ENCODE measurements at regions of chr1 and their contacts with region 1.

Region 1: GRCh38 chr1:19918057-19918456 is 5.4 kb downstream of the PLA2G2E start:
- DNase-seq: peak; percentile 68 to 88 (median 80)
- ATAC-seq: peak; percentile 69
- H3K4me3 ChIP-seq: no peak overlapping the region
- H3K4me3 Mint-ChIP-seq: no peak overlapping the region
- H3K27ac ChIP-seq: no peak overlapping the region
- H3K27ac Mint-ChIP-seq: no peak overlapping the region
- H3K4me1 ChIP-seq: no peaks in the 10 kb centered on the region
- H3K4me1 Mint-ChIP-seq: peaks cover 6% of the 10 kb centered on the region
- H3K27me3 ChIP-seq: no peaks in the 10 kb centered on the region
- H3K27me3 Mint-ChIP-seq: no peaks in the 10 kb centered on the region
- CTCF ChIP-seq: peak; percentile 86

Region 2: GRCh38 chr1:19547814-19548213 is 370.2 kb before region 1 on chr1:
- CTCF ChIA-PET with region 1: no interaction called
- POLR2A ChIA-PET with region 1: no interaction called
- intact Hi-C with region 1: no loop called
- DNase-seq: no peak
- ATAC-seq: no peak
- H3K4me3 ChIP-seq: no peak overlapping the region
- H3K4me3 Mint-ChIP-seq: no peak overlapping the region
- H3K27ac ChIP-seq: no peak overlapping the region
- H3K27ac Mint-ChIP-seq: no peak overlapping the region
- H3K4me1 ChIP-seq: no peaks in the 10 kb centered on the region
- H3K4me1 Mint-ChIP-seq: no peaks in the 10 kb centered on the region
- H3K27me3 ChIP-seq: no peaks in the 10 kb centered on the region
- H3K27me3 Mint-ChIP-seq: peaks cover 8% of the 10 kb centered on the region
- CTCF ChIP-seq: no peak

Region 3: GRCh38 chr1:19840228-19840627 is 77.8 kb before region 1 on chr1:
- CTCF ChIA-PET with region 1: no interaction called
- POLR2A ChIA-PET with region 1: no interaction called
- intact Hi-C with region 1: no loop called
- DNase-seq: no peak
- ATAC-seq: no peak
- H3K4me3 ChIP-seq: no peak overlapping the region
- H3K4me3 Mint-ChIP-seq: no peak overlapping the region
- H3K27ac ChIP-seq: no peak overlapping the region
- H3K27ac Mint-ChIP-seq: no peak overlapping the region
- H3K4me1 ChIP-seq: no peaks in the 10 kb centered on the region
- H3K4me1 Mint-ChIP-seq: no peaks in the 10 kb centered on the region
- H3K27me3 ChIP-seq: peaks cover 0 to 7% of the 10 kb centered on the region in 2 experiments
- H3K27me3 Mint-ChIP-seq: peaks cover 22% of the 10 kb centered on the region
- CTCF ChIP-seq: no peak

Region 4: GRCh38 chr1:19960618-19961017 is 42.6 kb after region 1 on chr1:
- CTCF ChIA-PET with region 1: no interaction called
- POLR2A ChIA-PET with region 1: no interaction called
- intact Hi-C with region 1: loop called in 1 of 2 experiments (anchors 5 kb)
- DNase-seq: no peak
- ATAC-seq: no peak
- H3K4me3 ChIP-seq: no peak overlapping the region
- H3K4me3 Mint-ChIP-seq: no peak overlapping the region
- H3K27ac ChIP-seq: no peak overlapping the region
- H3K27ac Mint-ChIP-seq: no peak overlapping the region
- H3K4me1 ChIP-seq: no peaks in the 10 kb centered on the region
- H3K4me1 Mint-ChIP-seq: no peaks in the 10 kb centered on the region
- H3K27me3 ChIP-seq: peaks cover 3 to 6% of the 10 kb centered on the region in 2 experiments
- H3K27me3 Mint-ChIP-seq: peaks cover 74% of the 10 kb centered on the region
- CTCF ChIP-seq: no peak

Region 5: DNA sequence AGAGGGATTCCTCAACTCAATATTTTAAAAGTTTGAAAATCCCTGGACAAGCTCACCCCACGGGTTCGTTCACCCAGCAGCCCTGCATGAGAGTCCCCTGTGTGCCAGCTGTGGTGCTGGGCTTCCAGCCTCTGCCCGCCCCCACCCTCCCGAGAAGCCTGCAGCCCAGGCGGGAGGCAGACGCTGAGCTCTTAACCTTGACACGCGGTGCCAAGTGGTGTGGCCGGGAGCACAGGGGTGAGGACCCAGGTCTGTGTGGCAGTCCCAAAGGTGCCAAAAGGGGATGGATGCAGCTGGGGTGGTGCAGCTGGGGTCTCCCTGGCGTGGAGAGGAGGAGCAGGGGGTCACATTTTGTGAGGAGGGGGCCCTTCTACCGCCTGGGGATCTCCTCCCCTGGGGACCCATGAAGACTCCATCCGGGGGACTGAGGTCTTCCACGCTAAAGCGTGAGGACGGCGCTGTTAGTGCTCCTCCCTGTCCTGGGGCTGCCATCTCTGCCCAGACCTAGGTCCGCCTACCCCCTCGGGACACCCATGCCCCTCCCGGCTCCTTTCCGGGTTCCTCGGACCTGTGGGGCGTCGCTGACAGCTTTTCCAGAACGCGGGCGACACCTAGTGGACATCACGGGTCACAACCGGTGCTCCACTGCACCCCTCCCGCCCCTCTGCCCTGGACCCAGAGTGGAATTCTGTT is 234.0 kb after region 1 on chr1:
- CTCF ChIA-PET with region 1: interaction called, 18 read pairs
- POLR2A ChIA-PET with region 1: no interaction called
- intact Hi-C with region 1: loop called (anchors 1 kb)
- DNase-seq: peak; percentile 64 to 87 (median 73)
- ATAC-seq: peak; percentile 91
- H3K4me3 ChIP-seq: peak overlapping the region; percentile 62
- H3K4me3 Mint-ChIP-seq: peak overlapping the region; percentile 81
- H3K27ac ChIP-seq: no peak overlapping the region
- H3K27ac Mint-ChIP-seq: no peak overlapping the region
- H3K4me1 ChIP-seq: peaks cover 21% of the 10 kb centered on the region
- H3K4me1 Mint-ChIP-seq: peaks cover 12% of the 10 kb centered on the region
- H3K27me3 ChIP-seq: no peaks in the 10 kb centered on the region
- H3K27me3 Mint-ChIP-seq: no peaks in the 10 kb centered on the region
- CTCF ChIP-seq: peak; percentile 91

Region 6: GRCh38 chr1:20194757-20195461 is 276.9 kb after region 1 on chr1:
- CTCF ChIA-PET with region 1: interaction called, 4 read pairs
- POLR2A ChIA-PET with region 1: no interaction called
- intact Hi-C with region 1: loop called (anchors 1 kb)
- DNase-seq: peak; percentile 59 to 83 (median 70)
- ATAC-seq: peak; percentile 67
- H3K4me3 ChIP-seq: no peak overlapping the region
- H3K4me3 Mint-ChIP-seq: no peak overlapping the region
- H3K27ac ChIP-seq: no peak overlapping the region
- H3K27ac Mint-ChIP-seq: no peak overlapping the region
- H3K4me1 ChIP-seq: peaks cover 4% of the 10 kb centered on the region
- H3K4me1 Mint-ChIP-seq: no peaks in the 10 kb centered on the region
- H3K27me3 ChIP-seq: peaks cover 0 to 2% of the 10 kb centered on the region in 2 experiments
- H3K27me3 Mint-ChIP-seq: peaks cover 5% of the 10 kb centered on the region
- CTCF ChIP-seq: peak; percentile 72

Region 7: GRCh38 chr1:20493839-20494608 is 576.0 kb after region 1 on chr1:
- CTCF ChIA-PET with region 1: interaction called, 4 read pairs
- POLR2A ChIA-PET with region 1: no interaction called
- intact Hi-C with region 1: loop called (anchors 1 kb)
- DNase-seq: peak; percentile 68 to 89 (median 81)
- ATAC-seq: peak; percentile 95
- H3K4me3 ChIP-seq: no peak overlapping the region
- H3K4me3 Mint-ChIP-seq: no peak overlapping the region
- H3K27ac ChIP-seq: no peak overlapping the region
- H3K27ac Mint-ChIP-seq: no peak overlapping the region
- H3K4me1 ChIP-seq: peaks cover 9% of the 10 kb centered on the region
- H3K4me1 Mint-ChIP-seq: no peaks in the 10 kb centered on the region
- H3K27me3 ChIP-seq: peaks cover 2 to 4% of the 10 kb centered on the region in 2 experiments
- H3K27me3 Mint-ChIP-seq: no peaks in the 10 kb centered on the region
- CTCF ChIP-seq: peak; percentile 97

Region 8: GRCh38 chr1:20633190-20634064 is 715.4 kb after region 1 on chr1 and contains the start of gene PINK1:
- CTCF ChIA-PET with region 1: no interaction called
- POLR2A ChIA-PET with region 1: no interaction called
- intact Hi-C with region 1: loop called in 1 of 2 experiments (anchors 10 kb)
- DNase-seq: peak; percentile 72 to 97 (median 86)
- ATAC-seq: peak; percentile 84
- H3K4me3 ChIP-seq: peak within 1 kb of the TSS; percentile 69
- H3K4me3 Mint-ChIP-seq: peak within 1 kb of the TSS; percentile 94
- H3K27ac ChIP-seq: peak within 1 kb of the TSS; percentile 52 to 72
- H3K27ac Mint-ChIP-seq: peak within 1 kb of the TSS; percentile 87
- H3K4me1 ChIP-seq: peaks cover 18% of the 10 kb centered on the region
- H3K4me1 Mint-ChIP-seq: peaks cover 12% of the 10 kb centered on the region
- H3K27me3 ChIP-seq: peaks cover 0 to 3% of the 10 kb centered on the region in 2 experiments
- H3K27me3 Mint-ChIP-seq: peaks cover 5% of the 10 kb centered on the region
- CTCF ChIP-seq: peak; percentile 99
- total RNA-seq, gene PINK1: 6.6 to 7.5 TPM